Psoas muscle (tissue), 8 donors: ENCODE measurements at regions of chr4 and their contacts with region 1.

Region 1: GRCh38 chr4:74426101-74426500 is 18.8 kb upstream of the AREG start:
- DNase-seq: no peak
- ATAC-seq: no peak
- H3K4me3 ChIP-seq: no peak overlapping the region
- H3K27ac ChIP-seq: no peak overlapping the region
- H3K4me1 ChIP-seq: no peaks in the 10 kb centered on the region
- H3K27me3 ChIP-seq: no peaks in the 10 kb centered on the region
- CTCF ChIP-seq: no peak

Region 2: GRCh38 chr4:74320559-74321118 is 105.5 kb before region 1 on chr4:
- intact Hi-C with region 1: no loop called
- DNase-seq: no peak
- ATAC-seq: no peak
- H3K4me3 ChIP-seq: no peak overlapping the region
- H3K27ac ChIP-seq: no peak overlapping the region
- H3K4me1 ChIP-seq: no peaks in the 10 kb centered on the region
- H3K27me3 ChIP-seq: peaks cover 0 to 6% (median 0%) of the 10 kb centered on the region in 3 donors
- CTCF ChIP-seq: peak; percentile 11

Region 3: GRCh38 chr4:74904509-74905065 is 478.5 kb after region 1 on chr4:
- intact Hi-C with region 1: loop called in 1 of 2 experiments (anchors 5 kb)
- DNase-seq: no peak
- ATAC-seq: no peak
- H3K4me3 ChIP-seq: no peak overlapping the region
- H3K27ac ChIP-seq: no peak overlapping the region
- H3K4me1 ChIP-seq: no peaks in the 10 kb centered on the region
- H3K27me3 ChIP-seq: no peaks in the 10 kb centered on the region
- CTCF ChIP-seq: no peak

Region 4: GRCh38 chr4:75146223-75146622 is 720.1 kb after region 1 on chr4:
- intact Hi-C with region 1: no loop called
- DNase-seq: no peak
- ATAC-seq: no peak
- H3K4me3 ChIP-seq: no peak overlapping the region
- H3K27ac ChIP-seq: no peak overlapping the region
- H3K4me1 ChIP-seq: no peaks in the 10 kb centered on the region
- H3K27me3 ChIP-seq: no peaks in the 10 kb centered on the region
- CTCF ChIP-seq: no peak